CD4-positive, alpha-beta memory T cell (primary cell): ENCODE measurements at regions of chr18 and their contacts with region 1.

Region 1: GRCh38 chr18:32018331-32019250 is at the start of gene RNF125:
- DNase-seq: peak; percentile 92 to 97 (median 96)
- H3K4me3 ChIP-seq: peak within 1 kb of the TSS; percentile 86 to 90
- H3K4me3 Mint-ChIP-seq: peak within 1 kb of the TSS; percentile 91 to 98 (median 93)
- H3K27ac ChIP-seq: peak within 1 kb of the TSS; percentile 73
- H3K27ac Mint-ChIP-seq: peak within 1 kb of the TSS; percentile 92 to 99 (median 94)
- H3K4me1 ChIP-seq: peaks cover 61% of the 10 kb centered on the region
- H3K4me1 Mint-ChIP-seq: peaks cover 36 to 84% (median 52%) of the 10 kb centered on the region in 4 donors
- H3K27me3 ChIP-seq: no peaks in the 10 kb centered on the region
- H3K27me3 Mint-ChIP-seq: no peaks in the 10 kb centered on the region
- total RNA-seq, gene RNF125: 38.2 to 40.3 TPM

Region 2: DNA sequence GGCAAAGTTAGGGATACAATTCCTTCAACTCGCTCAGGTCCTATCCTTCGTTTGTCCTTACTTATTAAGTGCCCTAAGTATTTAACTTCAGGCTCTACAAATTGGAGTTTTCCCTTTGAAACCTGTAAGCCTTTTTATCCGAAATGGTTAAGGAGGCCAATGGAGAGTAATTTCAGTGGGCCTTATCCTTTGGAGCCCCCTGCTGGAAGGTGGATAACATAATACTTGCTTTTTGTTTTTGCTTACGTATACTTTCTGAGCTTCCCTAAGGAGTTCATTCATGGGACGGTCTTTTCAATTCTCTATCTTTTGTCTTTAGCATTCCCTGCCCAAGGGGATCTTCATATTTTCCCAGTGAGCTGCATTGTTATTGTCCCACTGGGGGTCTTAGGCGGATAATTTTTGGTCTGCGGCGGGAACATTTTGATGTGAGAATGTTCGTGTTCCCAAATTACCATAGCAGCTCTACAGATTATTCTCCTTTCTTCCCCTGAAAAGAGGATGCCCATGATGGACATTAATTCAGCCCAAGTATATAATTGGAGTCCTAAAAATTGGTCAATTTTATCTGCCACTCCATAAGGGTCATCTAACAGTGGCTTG is 41.2 kb before region 1 on chr18:
- CTCF ChIA-PET with region 1: interaction called, 19 read pairs
- POLR2A ChIA-PET with region 1: interaction called, 16 read pairs
- intact Hi-C with region 1: loop called (anchors 2 kb)
- DNase-seq: peak in 4 of 5 donors; percentile 41 to 49 (median 46)
- H3K4me3 ChIP-seq: no peak overlapping the region
- H3K4me3 Mint-ChIP-seq: no peak overlapping the region
- H3K27ac ChIP-seq: no peak overlapping the region
- H3K27ac Mint-ChIP-seq: no peak overlapping the region
- H3K4me1 ChIP-seq: no peaks in the 10 kb centered on the region
- H3K4me1 Mint-ChIP-seq: peaks cover 2 to 9% (median 4%) of the 10 kb centered on the region in 4 donors
- H3K27me3 ChIP-seq: no peaks in the 10 kb centered on the region
- H3K27me3 Mint-ChIP-seq: no peaks in the 10 kb centered on the region

Region 3: GRCh38 chr18:31990823-31991222 is 27.8 kb before region 1 on chr18:
- CTCF ChIA-PET with region 1: interaction called, 19 read pairs
- POLR2A ChIA-PET with region 1: interaction called, 38 read pairs
- intact Hi-C with region 1: no loop called
- DNase-seq: no peak
- H3K4me3 ChIP-seq: no peak overlapping the region
- H3K4me3 Mint-ChIP-seq: no peak overlapping the region
- H3K27ac ChIP-seq: no peak overlapping the region
- H3K27ac Mint-ChIP-seq: peak overlapping the region in 1 of 7 donors; percentile 57
- H3K4me1 ChIP-seq: no peaks in the 10 kb centered on the region
- H3K4me1 Mint-ChIP-seq: no peaks in the 10 kb centered on the region
- H3K27me3 ChIP-seq: no peaks in the 10 kb centered on the region
- H3K27me3 Mint-ChIP-seq: no peaks in the 10 kb centered on the region

Region 4: GRCh38 chr18:32040936-32041335 is 22.3 kb after region 1 on chr18:
- CTCF ChIA-PET with region 1: interaction called, 36 read pairs
- POLR2A ChIA-PET with region 1: interaction called, 280 read pairs
- intact Hi-C with region 1: loop called (anchors 1 kb)
- DNase-seq: peak; percentile 74 to 78 (median 75)
- H3K4me3 ChIP-seq: no peak overlapping the region
- H3K4me3 Mint-ChIP-seq: peak overlapping the region; percentile 55 to 84 (median 70)
- H3K27ac ChIP-seq: peak overlapping the region; percentile 21
- H3K27ac Mint-ChIP-seq: peak overlapping the region; percentile 61 to 92 (median 87)
- H3K4me1 ChIP-seq: peaks cover 75% of the 10 kb centered on the region
- H3K4me1 Mint-ChIP-seq: peaks cover 48 to 75% (median 58%) of the 10 kb centered on the region in 4 donors
- H3K27me3 ChIP-seq: no peaks in the 10 kb centered on the region
- H3K27me3 Mint-ChIP-seq: no peaks in the 10 kb centered on the region

Region 5: DNA sequence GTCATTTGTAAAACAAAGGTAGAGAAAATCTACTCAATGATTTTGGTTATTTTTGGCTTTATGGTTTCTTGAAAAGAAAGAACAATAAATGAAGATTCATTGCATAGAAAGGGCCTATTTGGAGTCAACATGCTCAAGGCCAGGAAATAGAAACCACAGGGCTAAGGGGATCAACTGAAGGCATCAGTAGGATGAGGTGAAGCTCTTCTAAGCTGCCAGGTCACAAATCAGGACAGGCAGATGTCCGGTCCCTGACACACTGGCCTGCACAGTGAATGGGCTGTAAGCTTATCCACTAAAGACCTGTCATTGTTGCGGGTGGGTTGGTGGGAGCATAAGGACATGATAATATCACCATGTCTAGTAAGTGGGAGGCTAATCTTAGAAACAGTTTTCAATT is 41.4 kb after region 1 on chr18:
- CTCF ChIA-PET with region 1: interaction called, 13 read pairs
- POLR2A ChIA-PET with region 1: interaction called, 27 read pairs
- intact Hi-C with region 1: no loop called
- DNase-seq: no peak
- H3K4me3 ChIP-seq: no peak overlapping the region
- H3K4me3 Mint-ChIP-seq: peak overlapping the region in 3 of 8 donors; percentile 1 to 44 (median 31)
- H3K27ac ChIP-seq: no peak overlapping the region
- H3K27ac Mint-ChIP-seq: peak overlapping the region in 6 of 7 donors; percentile 8 to 71 (median 43)
- H3K4me1 ChIP-seq: peaks cover 38% of the 10 kb centered on the region
- H3K4me1 Mint-ChIP-seq: peaks cover 38 to 66% (median 51%) of the 10 kb centered on the region in 4 donors
- H3K27me3 ChIP-seq: no peaks in the 10 kb centered on the region
- H3K27me3 Mint-ChIP-seq: no peaks in the 10 kb centered on the region

Region 6: GRCh38 chr18:32086861-32087260 is 68.3 kb after region 1 on chr18:
- CTCF ChIA-PET with region 1: interaction called, 31 read pairs
- POLR2A ChIA-PET with region 1: interaction called, 147 read pairs
- intact Hi-C with region 1: loop called (anchors 1 kb)
- DNase-seq: no peak
- H3K4me3 ChIP-seq: no peak overlapping the region
- H3K4me3 Mint-ChIP-seq: peak overlapping the region in 2 of 8 donors; percentile 16 to 29
- H3K27ac ChIP-seq: no peak overlapping the region
- H3K27ac Mint-ChIP-seq: peak overlapping the region in 5 of 7 donors; percentile 13 to 95 (median 69)
- H3K4me1 ChIP-seq: peaks cover 44% of the 10 kb centered on the region
- H3K4me1 Mint-ChIP-seq: peaks cover 33 to 53% (median 42%) of the 10 kb centered on the region in 4 donors
- H3K27me3 ChIP-seq: no peaks in the 10 kb centered on the region
- H3K27me3 Mint-ChIP-seq: no peaks in the 10 kb centered on the region

Region 7: GRCh38 chr18:32104530-32104929 is 85.9 kb after region 1 on chr18:
- CTCF ChIA-PET with region 1: interaction called, 3 read pairs
- POLR2A ChIA-PET with region 1: interaction called, 10 read pairs
- intact Hi-C with region 1: no loop called
- DNase-seq: no peak
- H3K4me3 ChIP-seq: no peak overlapping the region
- H3K4me3 Mint-ChIP-seq: peak overlapping the region in 1 of 8 donors; percentile 58
- H3K27ac ChIP-seq: no peak overlapping the region
- H3K27ac Mint-ChIP-seq: peak overlapping the region in 1 of 7 donors; percentile 90
- H3K4me1 ChIP-seq: peaks cover 41% of the 10 kb centered on the region
- H3K4me1 Mint-ChIP-seq: peaks cover 24 to 60% (median 43%) of the 10 kb centered on the region in 4 donors
- H3K27me3 ChIP-seq: no peaks in the 10 kb centered on the region
- H3K27me3 Mint-ChIP-seq: no peaks in the 10 kb centered on the region